MCF 10A (cell line): ENCODE measurements at regions of chr5 and their contacts with region 1.

Region 1: GRCh38 chr5:69042915-69043658 is 50.7 kb upstream of the SLC30A5 start:
- DNase-seq: peak; percentile 92
- H3K4me3 Mint-ChIP-seq: no peak overlapping the region
- H3K27ac Mint-ChIP-seq: no peak overlapping the region
- H3K4me1 Mint-ChIP-seq: peaks cover 5% of the 10 kb centered on the region
- H3K27me3 Mint-ChIP-seq: no peaks in the 10 kb centered on the region
- CTCF ChIP-seq: peak; percentile 74

Region 2: DNA sequence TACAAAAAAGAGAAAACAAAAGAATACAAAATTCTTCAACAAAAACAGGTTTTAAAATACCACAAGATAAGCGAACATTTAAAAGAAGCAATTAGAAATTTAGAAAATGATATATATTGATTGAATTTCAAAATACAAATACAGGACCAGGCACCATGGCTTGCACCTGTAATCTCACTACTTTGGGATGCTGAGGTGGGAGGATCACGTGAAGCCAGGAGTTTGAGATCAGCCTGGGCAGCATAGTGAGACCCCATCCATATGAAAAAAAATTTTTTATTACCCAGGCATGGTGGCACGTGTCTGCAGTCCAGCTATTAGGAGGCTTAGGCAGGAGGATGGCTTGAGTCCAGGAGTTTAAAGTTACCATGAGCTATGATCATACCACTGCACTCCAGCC is 59.1 kb before region 1 on chr5:
- CTCF ChIA-PET with region 1: no interaction called
- POLR2A ChIA-PET with region 1: no interaction called
- intact Hi-C with region 1: no loop called
- DNase-seq: no peak
- H3K4me3 Mint-ChIP-seq: no peak overlapping the region
- H3K27ac Mint-ChIP-seq: no peak overlapping the region
- H3K4me1 Mint-ChIP-seq: no peaks in the 10 kb centered on the region
- H3K27me3 Mint-ChIP-seq: peaks cover 69% of the 10 kb centered on the region
- CTCF ChIP-seq: no peak

Region 3: GRCh38 chr5:69024241-69024651 is 18.8 kb before region 1 on chr5:
- CTCF ChIA-PET with region 1: interaction called, 13 read pairs
- POLR2A ChIA-PET with region 1: no interaction called
- intact Hi-C with region 1: no loop called
- DNase-seq: peak; percentile 74
- H3K4me3 Mint-ChIP-seq: no peak overlapping the region
- H3K27ac Mint-ChIP-seq: no peak overlapping the region
- H3K4me1 Mint-ChIP-seq: no peaks in the 10 kb centered on the region
- H3K27me3 Mint-ChIP-seq: peaks cover 32% of the 10 kb centered on the region
- CTCF ChIP-seq: peak; percentile 69

Region 4: GRCh38 chr5:69032009-69032408 is 11.1 kb before region 1 on chr5:
- CTCF ChIA-PET with region 1: interaction called, 13 read pairs
- POLR2A ChIA-PET with region 1: interaction called, 5 read pairs
- intact Hi-C with region 1: no loop called
- DNase-seq: no peak
- H3K4me3 Mint-ChIP-seq: no peak overlapping the region
- H3K27ac Mint-ChIP-seq: no peak overlapping the region
- H3K4me1 Mint-ChIP-seq: peaks cover 15% of the 10 kb centered on the region
- H3K27me3 Mint-ChIP-seq: peaks cover 19% of the 10 kb centered on the region
- CTCF ChIP-seq: no peak

Region 5: GRCh38 chr5:69083412-69083811 is 40.3 kb after region 1 on chr5:
- CTCF ChIA-PET with region 1: interaction called, 10 read pairs
- POLR2A ChIA-PET with region 1: no interaction called
- intact Hi-C with region 1: no loop called
- DNase-seq: peak; percentile 63
- H3K4me3 Mint-ChIP-seq: no peak overlapping the region
- H3K27ac Mint-ChIP-seq: no peak overlapping the region
- H3K4me1 Mint-ChIP-seq: peaks cover 14% of the 10 kb centered on the region
- H3K27me3 Mint-ChIP-seq: no peaks in the 10 kb centered on the region
- CTCF ChIP-seq: no peak

Region 6: DNA sequence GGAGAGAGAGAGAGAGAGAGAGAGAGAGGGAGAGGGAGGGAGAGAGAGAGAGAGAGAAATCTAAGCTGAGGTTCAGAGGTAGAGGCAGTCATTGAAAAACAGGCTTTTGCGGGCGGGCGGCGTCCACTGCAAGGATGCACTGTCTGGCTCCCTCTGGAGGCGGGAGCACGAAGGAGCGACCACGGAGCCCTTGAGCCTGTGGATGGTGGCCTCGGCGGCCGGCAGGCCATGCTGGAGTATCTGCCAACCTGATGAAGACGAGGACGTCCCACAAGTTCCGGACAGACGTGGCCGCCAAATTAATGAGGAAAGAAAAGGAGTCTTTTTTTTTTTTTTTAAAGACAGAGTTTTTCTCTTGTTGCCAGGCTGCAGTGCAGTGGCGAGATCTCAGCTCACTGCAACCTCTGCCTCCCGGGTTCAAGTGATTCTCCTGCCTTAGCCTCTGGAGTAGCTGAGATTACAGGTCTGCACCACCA is 291.7 kb after region 1 on chr5:
- CTCF ChIA-PET with region 1: interaction called, 4 read pairs
- POLR2A ChIA-PET with region 1: no interaction called
- intact Hi-C with region 1: loop called (anchors 10 kb)
- DNase-seq: peak; percentile 82
- H3K4me3 Mint-ChIP-seq: no peak overlapping the region
- H3K27ac Mint-ChIP-seq: no peak overlapping the region
- H3K4me1 Mint-ChIP-seq: peaks cover 8% of the 10 kb centered on the region
- H3K27me3 Mint-ChIP-seq: no peaks in the 10 kb centered on the region
- CTCF ChIP-seq: peak; percentile 69